Naive thymus-derived CD4-positive, alpha-beta T cell (primary cell): ENCODE measurements at regions of chr5 and their contacts with region 1.

Region 1: DNA sequence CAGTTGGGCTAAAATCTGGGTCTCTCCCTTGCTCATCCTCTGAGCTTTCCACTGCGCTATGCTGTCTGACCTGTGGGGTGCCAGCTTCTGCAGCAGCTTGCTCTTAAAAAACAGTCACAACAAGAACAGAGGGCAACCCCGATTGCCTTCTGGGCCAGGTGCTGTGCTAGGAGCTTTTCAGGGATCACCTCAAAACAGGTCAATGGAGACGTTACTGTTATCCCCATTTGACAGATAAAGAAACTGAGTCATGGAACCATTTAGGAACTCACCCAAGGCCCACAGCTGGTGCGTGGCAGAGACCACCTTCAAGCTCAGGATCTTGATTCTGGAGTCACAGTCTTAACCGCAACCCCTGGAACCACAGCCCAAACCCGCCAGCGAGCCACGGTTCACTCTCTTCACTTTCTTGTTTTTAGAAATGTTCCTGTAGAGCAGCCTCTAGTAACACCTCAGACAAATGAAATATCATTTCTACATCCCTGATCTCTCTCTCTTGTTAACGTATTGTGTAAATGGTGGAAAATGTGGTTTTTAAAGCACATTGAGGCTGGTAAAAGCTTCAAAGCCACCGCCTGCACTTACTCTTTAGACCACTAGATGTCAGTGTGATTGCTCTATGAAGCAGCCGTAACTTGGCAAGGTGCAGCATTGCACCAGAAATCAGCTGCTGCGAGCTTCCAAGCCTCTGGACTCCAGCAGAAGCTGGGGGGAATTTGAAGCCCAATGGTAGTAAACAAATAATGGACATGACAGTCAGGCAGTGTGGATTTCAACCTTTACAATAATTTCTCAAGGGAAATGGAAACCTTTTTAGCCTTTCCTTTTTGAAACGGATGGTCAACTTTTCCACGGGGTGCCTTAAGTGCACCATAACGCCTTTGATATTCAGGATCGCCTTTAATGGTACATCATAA is 1.7 kb downstream of the FYB1 start:
- DNase-seq: peak in 8 of 9 donors; percentile 68 to 88 (median 83)
- ATAC-seq: peak; percentile 86
- H3K4me3 ChIP-seq: peak overlapping the region; percentile 74
- H3K4me3 Mint-ChIP-seq: peak overlapping the region; percentile 82 to 98 (median 86)
- H3K27ac ChIP-seq: peak overlapping the region; percentile 93
- H3K27ac Mint-ChIP-seq: peak overlapping the region; percentile 84 to 99 (median 94)
- H3K4me1 ChIP-seq: peaks cover 45 to 49% of the 10 kb centered on the region in 2 donors
- H3K4me1 Mint-ChIP-seq: peaks cover 44 to 89% (median 77%) of the 10 kb centered on the region in 7 donors
- H3K27me3 ChIP-seq: no peaks in the 10 kb centered on the region
- H3K27me3 Mint-ChIP-seq: no peaks in the 10 kb centered on the region

Region 2: GRCh38 chr5:39074016-39074886 is 143.4 kb before region 1 on chr5 and contains the start of gene RICTOR:
- CTCF ChIA-PET with region 1: no interaction called
- POLR2A ChIA-PET with region 1: interaction called, 7 read pairs
- intact Hi-C with region 1: loop called in 1 of 2 experiments (anchors 5 kb)
- DNase-seq: peak; percentile 83 to 95 (median 88)
- ATAC-seq: peak; percentile 86
- H3K4me3 ChIP-seq: peak within 1 kb of the TSS; percentile 70
- H3K4me3 Mint-ChIP-seq: peak within 1 kb of the TSS; percentile 89 to 99 (median 98)
- H3K27ac ChIP-seq: peak within 1 kb of the TSS; percentile 100
- H3K27ac Mint-ChIP-seq: peak within 1 kb of the TSS; percentile 95 to 99 (median 98)
- H3K4me1 ChIP-seq: peaks cover 12 to 17% of the 10 kb centered on the region in 2 donors
- H3K4me1 Mint-ChIP-seq: peaks cover 23 to 63% (median 51%) of the 10 kb centered on the region in 7 donors
- H3K27me3 ChIP-seq: peaks cover 11 to 12% of the 10 kb centered on the region in 2 donors
- H3K27me3 Mint-ChIP-seq: peaks cover 4 to 29% (median 16%) of the 10 kb centered on the region in 5 donors
- total RNA-seq, gene RICTOR: 56.9 to 96.2 (median 86.5) TPM

Region 3: DNA sequence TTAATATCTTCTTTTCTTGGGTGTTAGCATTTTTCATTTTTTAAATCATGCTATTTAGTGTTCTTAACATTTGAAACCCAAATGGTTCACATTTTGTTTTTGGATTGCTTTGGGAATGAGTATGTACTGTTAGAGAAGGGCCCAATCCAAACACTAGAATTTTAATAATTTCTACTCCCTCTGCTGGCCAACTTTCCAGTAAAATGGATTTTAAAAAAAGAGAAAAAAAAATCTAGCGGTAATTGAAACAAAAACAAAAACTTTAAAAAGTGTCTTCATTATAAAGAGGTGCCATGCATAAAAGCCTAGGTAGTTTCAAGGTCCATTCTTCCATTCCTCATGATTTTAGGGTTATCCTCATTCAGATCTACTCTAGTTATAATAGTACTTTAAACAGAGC is 111.3 kb before region 1 on chr5:
- CTCF ChIA-PET with region 1: no interaction called
- POLR2A ChIA-PET with region 1: no interaction called
- intact Hi-C with region 1: no loop called
- DNase-seq: peak in 3 of 9 donors; percentile 5 to 29 (median 22)
- ATAC-seq: no peak
- H3K4me3 ChIP-seq: no peak overlapping the region
- H3K4me3 Mint-ChIP-seq: no peak overlapping the region
- H3K27ac ChIP-seq: peak overlapping the region; percentile 23
- H3K27ac Mint-ChIP-seq: peak overlapping the region in 7 of 9 donors; percentile 9 to 67 (median 51)
- H3K4me1 ChIP-seq: peaks cover 0 to under 1% of the 10 kb centered on the region in 2 donors
- H3K4me1 Mint-ChIP-seq: peaks cover 4 to 52% (median 28%) of the 10 kb centered on the region in 7 donors
- H3K27me3 ChIP-seq: no peaks in the 10 kb centered on the region
- H3K27me3 Mint-ChIP-seq: no peaks in the 10 kb centered on the region

Region 4: GRCh38 chr5:39171647-39172046 is 46.0 kb before region 1 on chr5:
- CTCF ChIA-PET with region 1: interaction called, 85 read pairs
- POLR2A ChIA-PET with region 1: interaction called, 77 read pairs
- intact Hi-C with region 1: no loop called
- DNase-seq: no peak
- ATAC-seq: no peak
- H3K4me3 ChIP-seq: no peak overlapping the region
- H3K4me3 Mint-ChIP-seq: peak overlapping the region; percentile 6 to 82 (median 54)
- H3K27ac ChIP-seq: peak overlapping the region; percentile 3
- H3K27ac Mint-ChIP-seq: peak overlapping the region; percentile 19 to 98 (median 93)
- H3K4me1 ChIP-seq: peaks cover 78 to 82% of the 10 kb centered on the region in 2 donors
- H3K4me1 Mint-ChIP-seq: peaks cover 76 to 99% (median 92%) of the 10 kb centered on the region in 7 donors
- H3K27me3 ChIP-seq: no peaks in the 10 kb centered on the region
- H3K27me3 Mint-ChIP-seq: no peaks in the 10 kb centered on the region

Region 5: DNA sequence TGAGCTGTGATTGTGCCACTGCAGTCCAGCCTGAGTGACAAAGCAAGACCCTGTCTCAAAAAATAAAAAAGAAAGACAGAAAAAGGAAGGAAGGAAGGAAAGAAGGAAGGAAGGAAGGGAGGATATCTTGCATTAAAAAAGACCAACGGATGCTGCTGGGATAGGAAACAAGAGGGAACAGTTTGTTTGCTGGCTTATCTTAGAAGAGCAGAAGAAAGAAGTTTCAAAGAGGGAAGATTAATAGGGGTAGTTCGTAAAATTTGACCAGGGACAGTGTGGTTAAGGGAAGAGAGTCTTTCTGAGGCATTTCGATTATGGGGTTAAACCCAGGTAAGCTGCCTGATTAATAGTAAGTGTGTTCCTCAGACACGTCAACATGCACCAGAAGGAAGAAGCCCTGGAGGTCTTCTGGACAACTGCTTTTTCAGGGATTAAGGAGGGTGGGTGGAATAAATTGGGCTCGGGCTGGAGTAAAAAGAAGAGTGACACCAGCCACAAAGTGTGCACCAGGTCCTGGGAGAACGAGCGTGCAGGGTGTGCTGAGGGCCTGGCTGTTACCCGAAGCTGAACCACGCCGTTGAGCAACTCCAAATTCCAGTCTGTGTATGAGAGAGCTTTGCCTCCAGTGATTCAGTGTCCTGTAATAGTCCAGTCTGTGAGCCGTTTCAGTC is 23.0 kb before region 1 on chr5:
- CTCF ChIA-PET with region 1: interaction called, 168 read pairs
- POLR2A ChIA-PET with region 1: interaction called, 211 read pairs
- intact Hi-C with region 1: no loop called
- DNase-seq: peak in 1 of 9 donors; percentile 17
- ATAC-seq: no peak
- H3K4me3 ChIP-seq: peak overlapping the region; percentile 46
- H3K4me3 Mint-ChIP-seq: peak overlapping the region; percentile 75 to 98 (median 88)
- H3K27ac ChIP-seq: peak overlapping the region; percentile 83
- H3K27ac Mint-ChIP-seq: peak overlapping the region; percentile 85 to 98 (median 94)
- H3K4me1 ChIP-seq: peaks cover 67 to 69% of the 10 kb centered on the region in 2 donors
- H3K4me1 Mint-ChIP-seq: peaks cover 52 to 78% (median 70%) of the 10 kb centered on the region in 7 donors
- H3K27me3 ChIP-seq: no peaks in the 10 kb centered on the region
- H3K27me3 Mint-ChIP-seq: no peaks in the 10 kb centered on the region

Region 6: GRCh38 chr5:39274398-39275085 is 56.9 kb after region 1 on chr5:
- CTCF ChIA-PET with region 1: interaction called, 192 read pairs
- POLR2A ChIA-PET with region 1: interaction called, 52 read pairs
- intact Hi-C with region 1: loop called (anchors 2 kb)
- DNase-seq: peak in 7 of 9 donors; percentile 29 to 52 (median 46)
- ATAC-seq: peak; percentile 68
- H3K4me3 ChIP-seq: peak overlapping the region; percentile 59
- H3K4me3 Mint-ChIP-seq: peak overlapping the region; percentile 63 to 88 (median 85)
- H3K27ac ChIP-seq: peak overlapping the region; percentile 74
- H3K27ac Mint-ChIP-seq: peak overlapping the region; percentile 92 to 98 (median 96)
- H3K4me1 ChIP-seq: peaks cover 34 to 49% of the 10 kb centered on the region in 2 donors
- H3K4me1 Mint-ChIP-seq: peaks cover 25 to 67% (median 47%) of the 10 kb centered on the region in 7 donors
- H3K27me3 ChIP-seq: no peaks in the 10 kb centered on the region
- H3K27me3 Mint-ChIP-seq: no peaks in the 10 kb centered on the region

Region 7: GRCh38 chr5:39547553-39548154 is 330.0 kb after region 1 on chr5:
- CTCF ChIA-PET with region 1: interaction called, 7 read pairs
- POLR2A ChIA-PET with region 1: no interaction called
- intact Hi-C with region 1: loop called (anchors 1 kb)
- DNase-seq: peak in 7 of 9 donors; percentile 14 to 49 (median 36)
- ATAC-seq: peak; percentile 50
- H3K4me3 ChIP-seq: no peak overlapping the region
- H3K4me3 Mint-ChIP-seq: peak overlapping the region in 8 of 10 donors; percentile 16 to 67 (median 50)
- H3K27ac ChIP-seq: no peak overlapping the region
- H3K27ac Mint-ChIP-seq: peak overlapping the region in 1 of 9 donors; percentile 55
- H3K4me1 ChIP-seq: no peaks in the 10 kb centered on the region
- H3K4me1 Mint-ChIP-seq: peaks cover 0 to 8% (median 5%) of the 10 kb centered on the region in 7 donors
- H3K27me3 ChIP-seq: no peaks in the 10 kb centered on the region
- H3K27me3 Mint-ChIP-seq: peaks cover 0 to 5% (median 0%) of the 10 kb centered on the region in 5 donors